BJ (cell line): ENCODE measurements at regions of chr17 and their contacts with region 1.

Region 1: GRCh38 chr17:37818689-37819088 is 73.8 kb upstream of the HNF1B start:
- DNase-seq: no peak
- H3K4me3 ChIP-seq: no peak overlapping the region
- H3K27me3 ChIP-seq: no peaks in the 10 kb centered on the region
- CTCF ChIP-seq: no peak

Region 2: GRCh38 chr17:37527249-37527851 is 291.3 kb before region 1 on chr17:
- CTCF ChIA-PET with region 1: interaction called, 11 read pairs
- POLR2A ChIA-PET with region 1: no interaction called
- DNase-seq: no peak
- H3K4me3 ChIP-seq: no peak overlapping the region
- H3K27me3 ChIP-seq: no peaks in the 10 kb centered on the region
- CTCF ChIP-seq: peak; percentile 78

Region 3: DNA sequence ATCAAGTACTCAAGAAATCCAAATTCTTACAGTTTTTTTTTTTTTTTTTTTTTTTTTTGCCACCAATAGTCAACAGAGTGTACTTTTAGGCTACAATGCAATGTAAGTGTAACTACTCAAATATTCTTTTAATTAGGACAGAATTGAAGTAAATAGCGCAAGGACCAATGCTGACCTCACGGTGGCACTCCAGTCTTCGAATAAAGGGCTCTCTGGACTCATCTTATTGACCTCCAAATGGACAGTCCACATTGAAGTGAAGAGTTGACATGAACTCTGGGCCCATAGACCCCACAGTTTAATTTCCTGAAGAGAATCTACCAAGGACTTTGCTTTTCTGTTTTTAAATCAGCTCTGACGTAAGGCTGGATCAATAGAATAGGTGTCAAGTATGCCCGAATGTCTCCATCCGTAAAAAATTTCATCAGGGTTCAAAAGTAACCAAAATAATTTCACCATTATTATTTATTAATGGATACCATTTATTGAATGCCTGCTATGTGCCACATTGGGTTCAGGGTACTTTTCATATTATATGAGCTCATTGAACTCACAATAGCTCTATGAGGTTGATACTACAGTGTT is 168.2 kb before region 1 on chr17:
- CTCF ChIA-PET with region 1: interaction called, 71 read pairs
- POLR2A ChIA-PET with region 1: no interaction called
- DNase-seq: peak; percentile 9
- H3K4me3 ChIP-seq: no peak overlapping the region
- H3K27me3 ChIP-seq: no peaks in the 10 kb centered on the region
- CTCF ChIP-seq: peak; percentile 59

Region 4: DNA sequence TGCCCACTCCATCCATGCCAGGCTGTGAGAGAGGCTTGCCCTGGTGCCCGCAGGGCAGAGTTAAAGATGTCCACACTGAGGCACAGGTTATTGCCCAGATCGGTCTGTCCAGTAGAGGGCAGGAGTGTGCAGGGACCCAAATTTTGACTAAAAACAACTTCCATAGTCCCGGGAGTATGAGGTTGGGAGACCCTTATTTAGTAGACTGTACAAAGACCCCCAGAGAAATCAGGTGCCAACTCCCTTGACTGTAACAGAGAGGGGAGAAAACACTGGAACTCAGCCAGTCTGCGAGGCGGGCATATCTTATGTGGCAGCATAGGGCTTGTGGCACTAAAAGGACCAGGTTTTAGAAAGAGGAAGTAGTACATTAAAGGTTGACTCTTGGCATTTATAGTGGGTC is 117.2 kb before region 1 on chr17:
- CTCF ChIA-PET with region 1: interaction called, 14 read pairs
- POLR2A ChIA-PET with region 1: no interaction called
- DNase-seq: no peak
- H3K4me3 ChIP-seq: no peak overlapping the region
- H3K27me3 ChIP-seq: no peaks in the 10 kb centered on the region
- CTCF ChIP-seq: peak; percentile 54

Region 5: GRCh38 chr17:37744961-37745800 is 73.5 kb before region 1 on chr17 and contains the start of gene HNF1B:
- CTCF ChIA-PET with region 1: interaction called, 16 read pairs
- POLR2A ChIA-PET with region 1: no interaction called
- DNase-seq: no peak
- H3K4me3 ChIP-seq: no peak within 1 kb of the TSS
- H3K27me3 ChIP-seq: peaks cover 50% of the 10 kb centered on the region
- CTCF ChIP-seq: no peak
- polyA plus RNA-seq, gene HNF1B: not detected in 2 replicates

Region 6: GRCh38 chr17:37791447-37792399 is 27.0 kb before region 1 on chr17:
- CTCF ChIA-PET with region 1: interaction called, 13 read pairs
- POLR2A ChIA-PET with region 1: no interaction called
- DNase-seq: peak; percentile 65
- H3K4me3 ChIP-seq: no peak overlapping the region
- H3K27me3 ChIP-seq: 0 out of 2 replicates have a peak, but pooled peaks cover 4% of the 10 kb centered on the region
- CTCF ChIP-seq: peak; percentile 59